ENCODE measurements at regions of chr2 and their contacts with region 1.

Region 1: DNA sequence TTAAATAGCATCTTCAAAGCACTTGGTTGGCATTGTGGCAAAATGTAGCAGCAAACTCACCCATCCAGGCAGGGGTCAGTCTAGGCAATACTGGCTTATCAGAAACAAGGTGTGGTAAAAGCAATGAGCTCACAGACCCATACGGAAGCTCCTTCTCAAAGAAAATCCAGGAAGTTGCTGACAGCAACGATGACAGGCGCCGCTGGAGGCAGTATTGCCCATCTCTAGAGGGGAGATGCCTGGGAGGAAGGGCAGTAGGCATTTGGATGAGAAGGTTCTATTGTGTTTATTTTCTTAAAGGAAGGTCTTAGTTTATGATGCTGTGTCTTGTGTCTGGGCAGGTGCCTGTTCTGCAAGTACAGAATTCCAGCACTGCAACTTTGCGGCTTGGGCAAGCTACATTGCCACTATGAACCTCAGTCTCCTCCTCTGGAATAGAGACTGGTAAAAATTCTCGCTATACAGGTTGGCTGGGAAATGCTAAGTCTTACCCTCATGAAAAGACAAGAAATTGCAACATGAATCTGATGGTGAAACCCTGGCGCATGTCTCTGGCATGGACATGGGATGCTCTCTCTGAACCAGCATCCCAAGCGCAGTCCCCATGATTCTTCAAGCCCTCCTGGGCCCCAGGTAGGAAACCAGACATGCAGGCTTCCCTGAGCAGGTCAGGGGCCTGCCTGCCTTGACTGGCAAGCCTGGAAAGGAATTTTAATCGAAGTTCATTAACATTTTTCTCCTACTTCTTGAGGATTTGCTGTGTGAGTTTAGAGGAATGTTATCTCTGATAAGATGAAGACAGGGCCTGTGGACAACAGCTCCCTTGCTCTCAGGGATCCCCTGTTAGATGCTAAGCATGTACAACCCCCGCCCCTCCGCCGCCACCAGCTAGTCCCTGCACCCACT is 156.0 kb downstream of the TFCP2L1 start:
- H3K4me3 Mint-ChIP-seq: no peak overlapping the region
- H3K27ac Mint-ChIP-seq: no peak overlapping the region
- H3K4me1 Mint-ChIP-seq: peaks cover 7% of the 10 kb centered on the region
- H3K27me3 Mint-ChIP-seq: peaks cover 2% of the 10 kb centered on the region

Region 2: DNA sequence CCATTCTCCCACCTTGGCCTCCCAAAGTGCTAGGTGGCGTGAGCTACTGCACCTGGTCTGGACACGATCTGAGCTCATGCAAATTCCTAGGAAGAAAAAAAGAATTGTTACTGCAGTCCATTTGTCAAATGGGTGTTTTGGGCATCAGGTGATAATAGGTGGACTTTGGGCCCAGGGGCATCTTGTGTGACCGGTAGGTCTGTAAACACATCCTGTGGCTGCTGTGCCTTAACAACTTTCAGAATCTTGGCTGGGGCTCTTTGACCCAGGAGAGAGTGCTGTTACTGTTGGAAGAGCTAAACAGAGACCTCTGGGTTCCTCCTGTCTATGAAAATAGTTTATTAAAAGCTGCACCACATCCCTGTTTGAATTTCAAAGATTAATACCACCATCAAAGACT is 190.9 kb after region 1 on chr2:
- intact Hi-C with region 1: loop called (anchors 2 kb)
- H3K4me3 Mint-ChIP-seq: no peak overlapping the region
- H3K27ac Mint-ChIP-seq: no peak overlapping the region
- H3K4me1 Mint-ChIP-seq: no peaks in the 10 kb centered on the region
- H3K27me3 Mint-ChIP-seq: peaks cover 3% of the 10 kb centered on the region

Region 3: DNA sequence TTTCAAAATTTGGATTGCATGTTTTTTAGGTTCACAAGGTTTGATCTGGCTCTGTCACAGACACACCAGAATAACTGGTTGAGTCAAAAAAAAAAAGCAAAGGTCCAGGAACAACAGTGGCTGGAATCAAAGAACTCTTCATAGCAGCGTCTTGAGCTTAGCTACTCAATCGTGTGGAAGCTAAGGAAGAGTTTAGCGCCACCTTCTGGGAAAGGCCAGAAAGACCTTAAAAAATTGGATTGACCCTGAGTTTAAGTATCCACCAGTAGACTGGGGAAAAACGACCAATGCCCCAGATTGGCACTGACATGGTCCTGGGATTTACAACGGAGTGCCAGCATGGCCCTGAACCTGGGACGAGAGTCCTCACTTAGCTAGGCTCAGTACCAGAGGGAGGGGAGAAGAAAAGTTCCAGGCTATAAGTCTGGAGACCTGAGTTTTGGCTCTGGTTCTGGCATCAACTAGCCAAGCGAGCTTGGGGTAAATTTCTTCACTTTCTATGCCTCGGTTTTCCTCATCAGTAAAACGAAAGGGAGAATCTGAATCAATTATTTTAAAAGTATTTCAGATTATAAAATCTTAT is 227.1 kb after region 1 on chr2:
- intact Hi-C with region 1: loop called (anchors 2 kb)
- H3K4me3 Mint-ChIP-seq: no peak overlapping the region
- H3K27ac Mint-ChIP-seq: no peak overlapping the region
- H3K4me1 Mint-ChIP-seq: no peaks in the 10 kb centered on the region
- H3K27me3 Mint-ChIP-seq: no peaks in the 10 kb centered on the region